ENCODE measurements at regions of chr15 and their contacts with region 1.

Region 1: DNA sequence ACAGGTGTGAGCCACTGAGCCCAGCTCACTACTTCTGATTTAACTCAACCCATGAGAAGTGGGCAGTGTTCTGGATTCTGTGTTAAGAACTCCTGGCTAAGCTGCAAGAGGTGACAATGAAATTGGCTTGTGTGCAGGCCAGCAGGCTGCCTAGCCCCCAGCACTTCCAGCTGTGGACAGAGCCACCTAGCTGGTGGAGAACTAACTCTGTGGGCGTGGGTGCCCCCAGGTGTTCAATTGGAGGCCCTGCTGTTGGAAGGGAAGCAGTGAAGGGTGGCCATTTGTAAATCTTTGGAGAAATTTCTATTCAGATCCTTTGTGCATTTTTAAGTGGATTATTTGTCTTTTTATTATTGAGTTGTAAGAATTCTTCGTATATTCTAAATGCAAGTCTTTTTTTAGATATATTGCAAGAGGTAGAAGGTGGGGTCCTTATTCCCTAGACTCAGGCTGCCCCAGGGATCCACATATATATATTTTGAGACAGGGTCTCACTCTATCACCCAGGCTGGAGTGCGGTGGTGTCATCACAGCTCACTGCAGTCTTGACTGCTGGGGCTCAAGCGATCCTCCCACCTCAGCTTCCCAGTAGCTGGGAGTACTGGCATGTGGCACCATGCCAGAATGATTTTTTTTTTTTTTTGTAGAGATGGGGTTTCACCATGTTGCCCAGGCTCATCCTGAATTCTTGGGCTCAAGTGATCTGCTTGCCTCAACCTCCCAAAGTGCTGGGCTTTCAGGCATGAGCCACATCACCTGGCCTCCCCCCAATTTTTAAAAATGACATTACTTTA is 7.2 kb upstream of the SCAMP5 start:
- DNase-seq: peak; percentile 53
- H3K4me3 ChIP-seq: no peak overlapping the region
- H3K27ac ChIP-seq: no peak overlapping the region
- H3K4me1 ChIP-seq: peaks cover 4% of the 10 kb centered on the region
- H3K27me3 ChIP-seq: peaks cover 6% of the 10 kb centered on the region in 2 experiments
- CTCF ChIP-seq: peak; percentile 51 to 70
- POLR2A ChIP-seq: no peak

Region 2: DNA sequence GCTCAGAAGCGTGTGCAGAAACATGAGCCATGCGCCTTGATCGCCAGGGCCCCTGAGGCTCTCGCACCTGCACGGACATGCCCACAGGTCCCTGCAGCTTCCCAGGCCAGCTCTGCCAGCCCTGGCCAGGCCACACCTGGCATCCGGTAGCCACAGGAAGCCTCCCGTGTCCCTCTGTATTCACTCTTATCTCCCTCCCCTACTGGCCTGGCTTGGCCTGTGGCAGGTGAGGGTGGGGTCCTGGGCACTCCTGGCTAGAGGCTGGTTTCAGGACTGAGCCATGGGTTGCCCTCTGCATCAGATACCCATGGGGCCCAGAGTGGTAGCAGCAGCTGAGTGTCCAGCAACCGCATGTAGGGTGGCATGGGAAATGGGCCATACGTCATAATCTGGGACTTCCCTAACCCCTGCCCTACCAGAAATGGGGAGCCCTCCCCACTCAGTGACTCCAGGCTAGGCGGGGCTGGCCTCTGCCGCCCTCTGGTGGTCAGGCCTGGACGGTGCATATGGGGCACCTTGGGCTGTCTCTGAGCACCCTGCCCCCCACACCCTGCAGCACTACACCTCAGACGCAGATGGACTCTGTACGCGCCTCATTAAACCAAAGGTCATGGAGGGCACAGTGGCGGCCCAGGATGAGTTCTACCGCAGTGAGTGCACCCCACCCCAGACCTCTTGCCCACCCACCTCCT is 188.2 kb before region 1 on chr15:
- CTCF ChIA-PET with region 1: no interaction called
- POLR2A ChIA-PET with region 1: no interaction called
- dilution Hi-C with region 1: no loop called
- intact Hi-C with region 1: no loop called
- DNase-seq: peak; percentile 52
- H3K4me3 ChIP-seq: no peak overlapping the region
- H3K27ac ChIP-seq: no peak overlapping the region
- H3K4me1 ChIP-seq: no peaks in the 10 kb centered on the region
- H3K27me3 ChIP-seq: no peaks in the 10 kb centered on the region
- CTCF ChIP-seq: peak; percentile 93 to 98
- POLR2A ChIP-seq: no peak

Region 3: DNA sequence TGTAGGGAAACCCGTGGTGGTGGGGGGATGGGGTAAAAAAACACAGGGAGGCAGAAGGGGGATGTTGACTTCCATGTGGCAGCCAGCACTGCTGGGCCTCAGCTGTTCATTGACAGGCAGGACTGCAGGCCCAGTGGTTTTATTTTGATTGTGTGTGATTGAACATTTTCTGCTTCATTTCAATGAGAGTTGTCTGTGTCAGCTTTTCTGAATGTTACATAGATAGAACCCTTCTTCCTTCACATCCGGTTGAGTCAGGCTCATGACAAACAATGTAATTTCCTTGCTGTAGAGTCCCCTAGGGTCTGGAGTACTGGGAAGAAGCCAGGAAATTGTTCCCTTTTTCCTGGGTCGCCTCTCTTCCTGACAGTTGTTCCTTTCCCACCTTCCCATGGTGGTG is 23.4 kb before region 1 on chr15:
- CTCF ChIA-PET with region 1: interaction called, 7 read pairs
- POLR2A ChIA-PET with region 1: no interaction called
- dilution Hi-C with region 1: no loop called
- intact Hi-C with region 1: loop called (anchors 1 kb)
- DNase-seq: peak; percentile 73
- H3K4me3 ChIP-seq: no peak overlapping the region
- H3K27ac ChIP-seq: peak overlapping the region; percentile 44
- H3K4me1 ChIP-seq: peaks cover 34% of the 10 kb centered on the region
- H3K27me3 ChIP-seq: no peaks in the 10 kb centered on the region
- CTCF ChIP-seq: no peak
- POLR2A ChIP-seq: no peak